ENCODE measurements at regions of chr20 and their contacts with region 1.

Region 1: DNA sequence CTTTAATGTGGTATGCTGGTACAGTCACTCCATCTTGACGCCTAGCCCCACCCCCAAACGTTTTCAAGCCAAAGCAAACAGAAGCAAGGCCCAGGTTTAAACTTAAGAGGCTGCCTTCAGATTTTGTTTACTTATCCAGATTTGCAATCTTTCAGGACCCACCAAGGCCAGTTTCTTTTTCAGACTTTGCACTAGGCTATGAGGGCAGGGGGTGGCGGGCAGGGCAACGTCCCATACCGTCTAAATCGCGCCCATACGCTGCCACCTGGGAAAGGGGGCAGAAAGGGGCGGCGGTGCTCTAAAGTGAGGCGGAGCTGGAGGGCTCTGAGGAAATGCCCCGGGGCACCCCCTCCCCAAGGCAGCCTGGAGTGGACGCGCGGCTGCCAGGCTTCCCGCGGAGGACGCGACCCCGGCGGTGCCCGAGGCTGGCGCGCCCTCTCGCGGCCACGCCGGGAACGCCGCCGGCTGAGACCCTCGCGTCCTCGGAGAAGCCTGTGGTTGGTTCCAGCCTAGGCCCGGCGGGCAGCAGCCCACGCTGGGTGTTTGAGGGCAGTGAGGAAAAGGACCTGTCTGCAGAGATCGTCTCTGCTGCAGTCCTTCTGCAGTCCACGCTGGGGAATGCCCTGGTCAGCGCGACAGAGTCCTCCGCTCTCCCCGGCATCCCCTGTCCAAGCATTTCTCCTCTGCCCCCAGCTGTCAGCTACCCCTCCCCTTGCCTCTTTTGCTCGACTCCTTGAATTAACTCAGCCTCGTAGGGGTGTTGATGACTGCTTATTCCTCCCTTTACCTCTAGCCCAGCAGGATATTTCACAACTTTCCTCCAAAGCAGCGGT is 129.2 kb upstream of the PRND start:
- DNase-seq: no peak
- ATAC-seq: peak; percentile 94
- H3K4me3 ChIP-seq: peak overlapping the region; percentile 38 to 54
- H3K27ac ChIP-seq: no peak overlapping the region
- H3K4me1 ChIP-seq: no peaks in the 10 kb centered on the region
- H3K27me3 ChIP-seq: peaks cover 4% of the 10 kb centered on the region; the same call in 1 of the 2 replicates
- CTCF ChIP-seq: peak; percentile 98

Region 2: GRCh38 chr20:4227085-4227821 is 365.3 kb before region 1 on chr20:
- CTCF ChIA-PET with region 1: no interaction called
- POLR2A ChIA-PET with region 1: interaction called, 12 read pairs
- in situ Hi-C with region 1: no loop called
- intact Hi-C with region 1: no loop called
- DNase-seq: no peak
- ATAC-seq: peak; percentile 79
- H3K4me3 ChIP-seq: no peak overlapping the region
- H3K27ac ChIP-seq: no peak overlapping the region
- H3K4me1 ChIP-seq: peaks cover 5% of the 10 kb centered on the region
- H3K27me3 ChIP-seq: no peaks in the 10 kb centered on the region
- CTCF ChIP-seq: peak; percentile 74

Region 3: GRCh38 chr20:4244700-4245485 is 347.6 kb before region 1 on chr20:
- CTCF ChIA-PET with region 1: no interaction called
- POLR2A ChIA-PET with region 1: no interaction called
- in situ Hi-C with region 1: no loop called
- intact Hi-C with region 1: loop called (anchors 2 kb)
- DNase-seq: no peak
- ATAC-seq: no peak
- H3K4me3 ChIP-seq: no peak overlapping the region
- H3K27ac ChIP-seq: no peak overlapping the region
- H3K4me1 ChIP-seq: no peaks in the 10 kb centered on the region; the same call in 1 of the 2 replicates
- H3K27me3 ChIP-seq: peaks cover under 1% of the 10 kb centered on the region; the same call in 1 of the 2 replicates
- CTCF ChIP-seq: no peak

Region 4: DNA sequence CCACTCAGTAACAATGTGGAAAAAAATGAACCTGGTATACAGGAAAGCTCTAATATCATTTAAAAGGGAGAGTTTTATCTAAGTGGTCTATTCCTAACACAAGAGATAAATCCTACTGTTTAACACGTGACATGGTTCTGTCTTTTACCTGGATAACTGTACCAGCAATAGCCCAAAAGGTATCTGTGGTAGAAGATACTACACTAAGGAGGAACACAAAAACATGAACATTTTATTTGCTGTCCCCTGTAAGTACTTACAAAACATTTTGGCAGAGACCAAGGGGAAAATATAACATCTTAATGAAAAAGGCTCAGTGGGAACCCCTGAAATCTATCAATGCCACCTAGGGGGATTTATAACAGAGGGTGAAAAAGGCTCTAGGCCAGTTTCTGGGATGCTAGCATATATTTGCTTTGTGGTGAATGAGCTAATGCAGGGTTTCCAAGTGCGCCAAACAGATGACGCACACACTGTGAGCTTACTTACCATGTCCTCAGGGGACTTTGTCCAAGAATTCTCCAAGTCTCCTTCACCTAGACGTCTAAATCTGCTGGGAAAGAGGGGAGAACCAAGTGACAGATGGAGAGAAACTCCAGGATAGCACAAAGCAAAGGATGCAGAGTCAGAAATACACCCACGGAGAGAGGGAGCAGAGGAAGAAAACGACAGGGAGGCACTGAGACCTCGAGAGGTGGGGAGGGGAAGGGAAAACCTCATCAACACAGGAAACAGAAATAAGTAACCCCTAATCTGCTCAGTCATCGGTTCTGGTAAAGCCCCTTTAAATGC is 18.8 kb before region 1 on chr20:
- CTCF ChIA-PET with region 1: interaction called, 10 read pairs
- POLR2A ChIA-PET with region 1: no interaction called
- in situ Hi-C with region 1: no loop called
- intact Hi-C with region 1: no loop called
- DNase-seq: peak; percentile 82
- ATAC-seq: peak; percentile 98
- H3K4me3 ChIP-seq: peak overlapping the region; percentile 7 to 48; a peak in 3 of 4 replicates
- H3K27ac ChIP-seq: peak overlapping the region; percentile 26; the same call in 1 of the 2 replicates
- H3K4me1 ChIP-seq: peaks cover 7% of the 10 kb centered on the region; the same call in 1 of the 2 replicates
- H3K27me3 ChIP-seq: no peaks in the 10 kb centered on the region
- CTCF ChIP-seq: no peak

Measured in Panc1 (cell line).